GM23248 (cell line): ENCODE measurements at regions of chr9 and their contacts with region 1.

Region 1: DNA sequence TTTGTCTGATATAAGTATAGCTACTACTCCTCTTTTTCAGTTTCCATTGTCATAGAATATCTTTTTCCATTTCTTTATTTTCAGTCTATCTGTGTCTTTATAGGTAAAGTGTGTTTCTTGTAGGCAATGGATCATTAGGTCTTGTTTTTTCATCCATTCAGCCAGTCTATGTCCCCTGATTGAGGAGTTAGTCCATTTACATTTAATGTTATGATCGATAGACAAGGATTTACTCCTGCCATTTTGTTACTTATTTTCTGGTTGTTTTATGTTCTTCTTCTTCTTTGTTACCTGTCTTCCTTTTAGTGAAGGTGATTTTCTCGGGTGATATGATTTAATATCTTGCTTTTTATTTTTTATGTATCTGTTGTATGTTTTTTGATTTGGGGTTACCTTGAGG is 169.0 kb downstream of the BARX1 start:
- DNase-seq: no peak
- H3K4me3 ChIP-seq: no peak overlapping the region
- H3K27ac ChIP-seq: no peak overlapping the region
- H3K4me1 ChIP-seq: no peaks in the 10 kb centered on the region
- H3K27me3 ChIP-seq: no peaks in the 10 kb centered on the region

Region 2: DNA sequence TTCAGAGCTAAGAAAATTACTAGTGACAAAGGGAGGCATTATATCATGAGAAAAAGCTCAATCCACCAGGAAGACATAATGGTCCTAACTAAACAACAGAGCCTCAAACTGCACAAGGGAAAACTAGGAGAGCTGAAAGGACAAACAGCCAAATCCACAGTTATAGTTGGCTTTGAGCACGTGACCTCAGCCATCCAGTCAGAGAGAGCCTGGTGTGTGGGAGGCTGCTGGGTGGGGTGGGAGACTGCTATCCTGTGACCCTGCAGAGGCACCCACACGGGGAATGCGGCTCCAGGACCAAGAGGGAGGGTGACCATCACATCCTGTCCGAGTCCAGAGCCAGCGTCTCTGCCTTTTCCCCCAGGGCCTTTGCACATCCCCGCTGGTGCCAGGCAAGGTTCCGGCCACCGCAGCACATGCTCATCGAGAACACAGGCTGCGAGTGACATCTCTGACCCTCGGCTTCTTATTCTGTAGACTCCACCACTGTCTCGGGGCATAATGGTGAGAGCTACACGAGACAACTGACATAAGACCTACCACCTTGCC is 64.7 kb before region 1 on chr9:
- in situ Hi-C with region 1: loop called (anchors 10 kb)
- DNase-seq: no peak
- H3K4me3 ChIP-seq: no peak overlapping the region
- H3K27ac ChIP-seq: no peak overlapping the region
- H3K4me1 ChIP-seq: no peaks in the 10 kb centered on the region
- H3K27me3 ChIP-seq: no peaks in the 10 kb centered on the region